ENCODE measurements at regions of chr6 and their contacts with region 1.

Region 1: GRCh38 chr6:45445749-45446549 is 68.2 kb upstream of the SUPT3H start:
- DNase-seq: peak; percentile 79 to 94
- H3K4me3 ChIP-seq: no peak overlapping the region
- H3K27ac ChIP-seq: peak overlapping the region; percentile 84
- H3K4me1 ChIP-seq: peaks cover 40% of the 10 kb centered on the region
- H3K27me3 ChIP-seq: no peaks in the 10 kb centered on the region
- CTCF ChIP-seq: no peak

Region 2: GRCh38 chr6:45310118-45310788 is 135.7 kb before region 1 on chr6:
- CTCF ChIA-PET with region 1: no interaction called
- POLR2A ChIA-PET with region 1: no interaction called
- intact Hi-C with region 1: no loop called
- DNase-seq: no peak
- H3K4me3 ChIP-seq: no peak overlapping the region
- H3K27ac ChIP-seq: no peak overlapping the region
- H3K4me1 ChIP-seq: no peaks in the 10 kb centered on the region
- H3K27me3 ChIP-seq: no peaks in the 10 kb centered on the region
- CTCF ChIP-seq: no peak

Region 3: GRCh38 chr6:45415315-45415714 is 30.6 kb before region 1 on chr6:
- CTCF ChIA-PET with region 1: no interaction called
- POLR2A ChIA-PET with region 1: no interaction called
- intact Hi-C with region 1: no loop called
- DNase-seq: no peak
- H3K4me3 ChIP-seq: no peak overlapping the region
- H3K27ac ChIP-seq: no peak overlapping the region
- H3K4me1 ChIP-seq: peaks cover 16% of the 10 kb centered on the region
- H3K27me3 ChIP-seq: no peaks in the 10 kb centered on the region
- CTCF ChIP-seq: no peak

Region 4: GRCh38 chr6:45428727-45429126 is 17.2 kb before region 1 on chr6:
- CTCF ChIA-PET with region 1: no interaction called
- POLR2A ChIA-PET with region 1: interaction called, 21 read pairs
- intact Hi-C with region 1: no loop called
- DNase-seq: no peak
- H3K4me3 ChIP-seq: no peak overlapping the region
- H3K27ac ChIP-seq: no peak overlapping the region
- H3K4me1 ChIP-seq: 0 out of 2 replicates have a peak, but pooled peaks cover 4% of the 10 kb centered on the region
- H3K27me3 ChIP-seq: no peaks in the 10 kb centered on the region
- CTCF ChIP-seq: no peak

Region 5: GRCh38 chr6:45504947-45505346 is 59.0 kb after region 1 on chr6:
- CTCF ChIA-PET with region 1: no interaction called
- POLR2A ChIA-PET with region 1: no interaction called
- intact Hi-C with region 1: loop called (anchors 2 kb)
- DNase-seq: peak in 1 of 2 experiments; percentile 56
- H3K4me3 ChIP-seq: no peak overlapping the region
- H3K27ac ChIP-seq: no peak overlapping the region
- H3K4me1 ChIP-seq: peaks cover 32% of the 10 kb centered on the region
- H3K27me3 ChIP-seq: no peaks in the 10 kb centered on the region
- CTCF ChIP-seq: no peak

Region 6: DNA sequence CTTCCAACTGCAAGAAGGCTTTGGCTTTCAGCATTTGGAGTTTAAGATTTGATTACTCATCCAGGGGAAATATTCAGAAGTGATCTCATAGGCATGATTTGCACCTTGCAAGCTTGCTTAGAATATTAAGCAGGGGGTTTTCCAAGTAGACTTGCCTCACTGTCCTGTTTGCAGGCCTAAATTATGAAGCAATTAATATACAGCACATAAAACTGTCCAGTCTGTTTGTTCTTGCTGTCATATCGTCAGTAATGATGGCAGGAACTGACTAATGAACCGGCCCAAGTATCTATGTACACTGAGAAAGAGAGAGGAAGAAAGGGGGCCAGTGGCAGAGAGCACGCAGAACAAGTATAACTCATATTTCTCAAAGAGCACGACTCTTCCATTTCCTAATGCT is 144.3 kb after region 1 on chr6:
- CTCF ChIA-PET with region 1: no interaction called
- POLR2A ChIA-PET with region 1: no interaction called
- intact Hi-C with region 1: loop called (anchors 5 kb)
- DNase-seq: peak in 1 of 2 experiments; percentile 87
- H3K4me3 ChIP-seq: no peak overlapping the region
- H3K27ac ChIP-seq: peak overlapping the region; percentile 88
- H3K4me1 ChIP-seq: peaks cover 62% of the 10 kb centered on the region
- H3K27me3 ChIP-seq: no peaks in the 10 kb centered on the region
- CTCF ChIP-seq: no peak

Measured in PC-9 (cell line).